ENCODE measurements at regions of chr9 and their contacts with region 1.

Region 1: DNA sequence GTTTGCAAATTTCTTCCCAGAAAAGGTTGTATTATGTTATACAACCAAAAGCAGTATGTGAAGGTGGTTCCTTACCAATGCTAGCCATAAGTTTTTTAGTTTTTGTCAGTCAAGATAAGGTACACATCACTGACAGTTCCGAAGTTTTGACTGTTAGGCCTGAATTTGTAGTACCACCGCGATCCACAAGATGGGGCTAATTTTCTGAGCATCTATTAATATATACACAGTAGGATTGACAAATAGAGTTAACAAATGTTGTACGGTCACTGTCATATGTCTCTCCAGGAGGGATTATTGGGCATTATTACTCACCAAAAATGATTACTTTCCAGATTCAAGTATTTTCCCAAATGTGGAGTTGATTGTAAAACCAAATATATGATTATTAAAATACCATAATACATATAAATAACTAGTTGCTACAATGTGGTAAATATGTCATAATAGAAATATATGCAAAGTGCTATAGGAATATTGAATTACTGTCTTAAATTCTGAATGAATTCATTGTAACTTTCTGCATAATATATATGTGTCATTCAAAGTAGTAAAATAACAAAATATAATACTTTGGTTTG is 28.4 kb upstream of the LRRC19 start:
- DNase-seq: peak; percentile 54 to 60
- H3K4me3 ChIP-seq: no peak overlapping the region
- H3K27ac ChIP-seq: no peak overlapping the region
- H3K4me1 ChIP-seq: no peaks in the 10 kb centered on the region
- H3K27me3 ChIP-seq: no peaks in the 10 kb centered on the region
- CTCF ChIP-seq: peak; percentile 40 to 80 (median 70)
- POLR2A ChIP-seq: no peak

Region 2: DNA sequence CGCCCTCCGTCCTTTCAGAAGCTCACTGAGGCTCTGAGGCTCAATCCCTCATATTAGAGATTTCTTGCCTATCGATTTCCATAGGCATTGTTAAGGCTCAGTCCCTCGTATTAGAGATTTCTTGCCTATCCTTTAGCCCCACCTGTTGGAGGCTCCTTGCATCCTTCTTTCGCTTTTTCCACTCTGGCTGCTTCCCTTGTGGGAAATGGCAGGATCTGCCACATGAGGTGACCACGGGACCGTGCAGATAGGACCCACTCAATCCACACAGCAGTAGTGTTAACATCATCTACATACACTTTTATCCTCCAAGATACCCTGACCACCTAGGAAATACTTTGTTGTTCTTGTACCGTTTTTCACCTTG is 58.2 kb before region 1 on chr9:
- intact Hi-C with region 1: no loop called
- DNase-seq: no peak
- H3K4me3 ChIP-seq: no peak overlapping the region
- H3K27ac ChIP-seq: no peak overlapping the region
- H3K4me1 ChIP-seq: no peaks in the 10 kb centered on the region
- H3K27me3 ChIP-seq: no peaks in the 10 kb centered on the region
- CTCF ChIP-seq: peak in 3 of 6 experiments; percentile 10 to 37 (median 23)
- POLR2A ChIP-seq: no peak

Region 3: GRCh38 chr9:27194401-27195091 is 160.6 kb after region 1 on chr9:
- intact Hi-C with region 1: loop called (anchors 10 kb)
- DNase-seq: no peak
- H3K4me3 ChIP-seq: no peak overlapping the region
- H3K27ac ChIP-seq: no peak overlapping the region
- H3K4me1 ChIP-seq: peaks cover 5 to 9% of the 10 kb centered on the region in 2 donors
- H3K27me3 ChIP-seq: no peaks in the 10 kb centered on the region
- CTCF ChIP-seq: no peak
- POLR2A ChIP-seq: no peak

Region 4: GRCh38 chr9:27276193-27277030 is 242.5 kb after region 1 on chr9:
- intact Hi-C with region 1: loop called (anchors 5 kb)
- DNase-seq: peak in 1 of 2 donors; percentile 27
- H3K4me3 ChIP-seq: no peak overlapping the region
- H3K27ac ChIP-seq: no peak overlapping the region
- H3K4me1 ChIP-seq: peaks cover 0 to 9% of the 10 kb centered on the region in 2 donors
- H3K27me3 ChIP-seq: no peaks in the 10 kb centered on the region
- CTCF ChIP-seq: peak; percentile 33 to 83 (median 76)
- POLR2A ChIP-seq: no peak

Region 5: GRCh38 chr9:27421547-27421946 is 387.6 kb after region 1 on chr9:
- intact Hi-C with region 1: no loop called
- DNase-seq: no peak
- H3K4me3 ChIP-seq: no peak overlapping the region
- H3K27ac ChIP-seq: no peak overlapping the region
- H3K4me1 ChIP-seq: peaks cover 9 to 11% of the 10 kb centered on the region in 2 donors
- H3K27me3 ChIP-seq: no peaks in the 10 kb centered on the region
- CTCF ChIP-seq: no peak
- POLR2A ChIP-seq: no peak

Measured in thyroid gland (tissue), 4 donors.